ENCODE measurements at regions of chr12 and their contacts with region 1.

Region 1: DNA sequence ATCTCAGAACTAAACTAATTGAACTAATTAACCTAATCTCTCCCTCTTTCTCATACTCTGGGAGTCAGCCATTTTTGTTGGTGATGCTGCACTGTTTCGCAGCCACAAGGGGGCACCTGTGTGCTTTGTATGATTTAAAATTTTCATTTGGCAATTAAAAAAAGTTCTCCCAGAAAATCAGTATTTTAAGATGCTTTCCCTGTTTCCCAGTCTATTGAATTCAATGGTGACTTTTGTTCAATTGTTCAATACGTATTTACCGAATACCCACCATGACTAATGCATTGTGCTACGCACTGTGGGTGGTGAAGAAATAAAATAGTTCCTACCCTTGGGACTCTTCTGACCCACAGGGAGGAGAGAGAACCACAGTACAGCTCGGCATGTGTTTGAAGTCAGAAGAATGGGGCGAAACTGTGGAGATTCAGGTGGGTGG is 63.7 kb downstream of the ZNF664 start:
- DNase-seq: no peak
- H3K4me3 ChIP-seq: no peak overlapping the region
- H3K27ac ChIP-seq: no peak overlapping the region
- H3K4me1 ChIP-seq: peaks cover 0 to 5% (median 0%) of the 10 kb centered on the region in 4 donors
- H3K27me3 ChIP-seq: no peaks in the 10 kb centered on the region
- CTCF ChIP-seq: peak; percentile 91 to 94 (median 93)
- EP300 ChIP-seq: no peak
- POLR2A ChIP-seq: no peak

Region 2: GRCh38 chr12:123905319-123905925 is 131.3 kb before region 1 on chr12:
- intact Hi-C with region 1: loop called (anchors 5 kb)
- DNase-seq: no peak
- H3K4me3 ChIP-seq: no peak overlapping the region
- H3K27ac ChIP-seq: no peak overlapping the region
- H3K4me1 ChIP-seq: no peaks in the 10 kb centered on the region
- H3K27me3 ChIP-seq: peaks cover 0 to 38% (median 0%) of the 10 kb centered on the region in 4 donors
- CTCF ChIP-seq: peak; percentile 70 to 75 (median 72)
- EP300 ChIP-seq: no peak
- POLR2A ChIP-seq: no peak

Region 3: GRCh38 chr12:123973552-123974341 is 62.9 kb before region 1 on chr12:
- intact Hi-C with region 1: no loop called
- DNase-seq: peak; percentile 92
- H3K4me3 ChIP-seq: peak overlapping the region; percentile 97 to 99 (median 97)
- H3K27ac ChIP-seq: peak overlapping the region; percentile 87 to 98 (median 96)
- H3K4me1 ChIP-seq: peaks cover 15 to 46% (median 37%) of the 10 kb centered on the region in 4 donors
- H3K27me3 ChIP-seq: no peaks in the 10 kb centered on the region
- CTCF ChIP-seq: no peak
- EP300 ChIP-seq: no peak
- POLR2A ChIP-seq: no peak

Region 4: DNA sequence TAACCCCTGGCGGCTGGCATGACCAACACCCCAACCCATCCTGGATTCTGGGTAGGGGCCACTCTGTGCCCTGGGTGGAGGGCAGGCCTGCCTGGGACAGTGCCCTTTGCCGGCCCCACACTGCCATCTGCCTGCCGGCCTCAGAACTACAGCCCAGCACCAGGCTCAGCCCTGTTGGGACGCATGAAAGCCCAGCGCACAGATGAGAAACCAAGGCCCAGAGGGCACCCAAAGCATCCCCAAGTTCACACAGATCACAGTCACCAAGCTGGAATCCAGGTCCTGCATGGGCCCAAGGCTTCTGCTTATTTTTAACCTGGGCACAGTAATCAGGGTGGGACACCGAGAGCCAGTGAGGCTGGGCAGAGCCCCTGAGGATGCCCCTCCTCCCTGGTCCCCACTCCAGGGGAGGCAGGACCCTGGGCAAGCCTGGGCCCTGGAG is 284.4 kb after region 1 on chr12:
- intact Hi-C with region 1: loop called (anchors 1 kb)
- DNase-seq: no peak
- H3K4me3 ChIP-seq: no peak overlapping the region
- H3K27ac ChIP-seq: no peak overlapping the region
- H3K4me1 ChIP-seq: peaks cover 0 to 10% (median 5%) of the 10 kb centered on the region in 4 donors
- H3K27me3 ChIP-seq: no peaks in the 10 kb centered on the region
- CTCF ChIP-seq: peak in 2 of 3 experiments; percentile 93 to 96
- EP300 ChIP-seq: no peak
- POLR2A ChIP-seq: no peak

Region 5: DNA sequence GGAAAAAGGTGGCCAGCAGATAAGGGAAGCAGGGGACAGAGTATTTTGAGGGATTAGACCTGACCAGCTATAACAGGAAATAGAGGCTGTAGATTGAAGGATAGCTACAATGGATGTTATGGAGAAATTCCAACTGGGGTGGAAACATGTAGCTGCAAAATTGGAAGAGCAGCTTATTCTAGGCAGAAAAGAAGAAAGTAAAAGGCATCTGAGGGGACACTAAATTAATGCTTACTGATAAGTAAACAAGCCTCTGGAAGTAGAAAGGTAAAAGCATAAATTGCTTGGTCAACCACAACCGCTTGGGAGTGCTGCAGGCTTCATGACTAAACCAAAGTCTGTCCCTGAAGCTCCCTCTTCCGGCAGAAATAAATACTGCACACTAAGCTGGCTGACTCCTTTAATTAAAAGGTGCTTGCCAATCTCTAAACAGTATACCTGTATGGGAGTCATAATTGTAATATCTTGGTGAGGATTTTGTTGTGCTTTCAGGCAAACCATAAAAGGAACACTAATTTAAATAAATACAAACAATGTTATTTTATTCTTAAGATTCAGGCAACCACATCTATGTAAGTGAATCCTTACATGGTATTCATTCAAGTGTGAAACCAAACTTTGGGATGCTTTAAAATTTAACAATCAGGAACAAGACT is 870.0 kb after region 1 on chr12:
- intact Hi-C with region 1: loop called (anchors 5 kb)
- DNase-seq: peak; percentile 96
- H3K4me3 ChIP-seq: no peak overlapping the region
- H3K27ac ChIP-seq: peak overlapping the region in 2 of 4 donors; percentile 40 to 64
- H3K4me1 ChIP-seq: peaks cover 36 to 69% (median 59%) of the 10 kb centered on the region in 4 donors
- H3K27me3 ChIP-seq: no peaks in the 10 kb centered on the region
- CTCF ChIP-seq: peak; percentile 96 to 99 (median 98)
- EP300 ChIP-seq: no peak
- POLR2A ChIP-seq: no peak